Activated CD8-positive, alpha-beta memory T cell treated with anti-CD3 and anti-CD28 coated beads, Interleukin-2, amount 10 ng/mL, durations not matched to agents 7 days and 5 days (primary cell): ENCODE measurements at regions of chr11 and their contacts with region 1.

Region 1: DNA sequence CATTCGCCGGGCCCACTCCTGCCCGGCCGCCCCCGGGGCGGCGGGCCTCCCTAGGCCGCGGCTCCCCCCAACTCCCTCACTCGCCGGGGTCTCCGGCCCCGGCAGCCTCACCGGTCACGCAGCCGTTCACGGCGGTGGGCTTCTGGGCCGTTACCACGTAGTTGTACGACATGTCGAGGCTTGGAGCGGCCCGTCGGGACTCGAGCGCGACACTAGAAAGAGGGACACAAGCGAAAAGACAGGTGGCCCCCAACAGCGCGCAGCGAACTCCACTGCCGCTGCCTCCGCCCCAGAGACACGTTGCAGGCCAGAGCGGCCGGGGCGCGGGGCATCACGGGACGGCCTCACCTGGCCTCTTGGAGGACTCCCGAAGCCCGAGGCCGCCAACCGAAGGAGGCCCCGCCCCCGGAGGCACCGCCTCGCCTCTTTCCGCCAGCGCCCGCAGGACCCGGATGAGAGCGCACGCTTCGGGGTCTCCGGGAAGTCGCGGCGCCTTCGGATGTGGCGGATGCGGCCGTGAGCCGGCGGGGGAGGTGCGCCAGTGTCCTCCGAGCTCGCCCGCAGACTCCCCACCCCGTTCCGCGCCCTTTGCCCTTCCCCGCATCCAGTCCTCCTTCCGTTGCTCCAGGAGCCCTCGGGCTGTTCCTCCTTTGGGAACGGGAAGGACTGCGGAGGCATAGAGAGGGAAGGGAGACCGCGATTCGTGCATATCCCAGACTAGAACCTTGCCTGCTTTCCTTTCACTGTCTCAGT is at the starts of genes DDB1 and TKFC:
- DNase-seq: peak; percentile 99
- ATAC-seq: peak; percentile 95
- H3K4me3 Mint-ChIP-seq: peak within 1 kb of the TSS; percentile 86
- H3K27ac Mint-ChIP-seq: peak within 1 kb of the TSS; percentile 98
- H3K4me1 Mint-ChIP-seq: peaks cover 76% of the 10 kb centered on the region
- H3K27me3 Mint-ChIP-seq: no peaks in the 10 kb centered on the region
- total RNA-seq, gene DDB1: 189 to 258 TPM
- total RNA-seq, gene TKFC: 36.9 to 42.3 TPM

Region 2: DNA sequence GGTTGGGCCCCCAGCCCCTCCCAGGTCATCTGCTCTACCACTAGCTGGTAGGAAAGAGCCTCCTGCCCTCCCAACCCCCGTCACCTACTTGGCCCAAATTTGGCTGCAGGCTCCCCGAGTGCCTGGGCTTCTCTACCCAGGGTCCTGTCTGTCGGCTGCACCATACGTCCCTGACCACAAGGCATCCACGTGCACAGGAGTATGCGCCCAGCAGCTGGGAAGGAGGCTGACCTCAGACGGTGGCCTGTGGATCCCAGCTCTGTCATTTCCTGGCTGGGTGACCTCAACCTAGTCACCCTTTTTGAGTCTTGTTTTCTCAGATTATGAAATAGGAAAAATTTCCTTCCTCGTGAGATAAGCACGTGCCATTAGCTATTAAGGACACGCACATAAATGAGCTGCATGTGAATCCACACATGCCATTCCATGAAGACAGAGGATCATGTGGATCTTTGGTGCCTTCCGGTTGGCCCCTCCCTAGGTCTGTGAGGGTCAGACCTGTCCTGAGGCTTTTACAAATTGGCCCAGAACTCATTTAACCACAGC is 15.0 kb after region 1 on chr11:
- CTCF ChIA-PET with region 1: interaction called, 180 read pairs
- DNase-seq: no peak
- ATAC-seq: no peak
- H3K4me3 Mint-ChIP-seq: no peak overlapping the region
- H3K27ac Mint-ChIP-seq: no peak overlapping the region
- H3K4me1 Mint-ChIP-seq: no peaks in the 10 kb centered on the region
- H3K27me3 Mint-ChIP-seq: no peaks in the 10 kb centered on the region

Region 3: GRCh38 chr11:61369372-61370219 is 36.6 kb after region 1 on chr11:
- CTCF ChIA-PET with region 1: interaction called, 180 read pairs
- DNase-seq: no peak
- ATAC-seq: no peak
- H3K4me3 Mint-ChIP-seq: no peak overlapping the region
- H3K27ac Mint-ChIP-seq: peak overlapping the region; percentile 22
- H3K4me1 Mint-ChIP-seq: peaks cover 19% of the 10 kb centered on the region
- H3K27me3 Mint-ChIP-seq: no peaks in the 10 kb centered on the region

Region 4: DNA sequence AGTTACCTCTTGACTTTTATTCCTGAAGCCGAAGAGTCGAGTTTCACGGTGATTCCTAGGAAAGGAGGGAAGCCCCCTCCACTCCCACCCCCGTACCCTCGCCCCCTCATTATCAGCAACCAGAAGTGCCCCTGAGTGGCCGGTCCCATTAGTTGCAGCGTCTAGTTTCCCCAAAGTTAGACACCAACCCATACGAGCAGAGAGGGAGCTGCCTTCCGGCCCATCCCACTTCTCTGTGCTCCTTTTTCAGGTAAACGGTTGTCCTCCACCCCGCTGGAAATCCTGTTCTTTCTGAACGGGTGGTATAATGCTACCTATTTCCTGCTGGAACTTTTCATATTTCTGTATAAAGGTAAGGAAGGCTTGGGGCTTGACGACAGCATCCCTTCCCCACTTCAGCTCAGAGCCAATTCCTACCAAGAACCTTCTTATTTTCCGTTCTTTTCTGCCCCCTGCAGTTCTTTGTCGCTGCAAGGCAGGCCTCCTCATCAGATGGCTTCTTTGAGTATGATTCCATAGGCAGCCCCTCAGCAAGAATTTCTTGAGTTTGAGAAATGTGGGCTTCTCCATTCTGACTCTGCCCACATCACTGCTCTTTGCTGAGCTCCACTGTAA is 60.1 kb after region 1 on chr11:
- CTCF ChIA-PET with region 1: interaction called, 261 read pairs
- DNase-seq: no peak
- ATAC-seq: no peak
- H3K4me3 Mint-ChIP-seq: peak overlapping the region; percentile 90
- H3K27ac Mint-ChIP-seq: peak overlapping the region; percentile 96
- H3K4me1 Mint-ChIP-seq: peaks cover 22% of the 10 kb centered on the region
- H3K27me3 Mint-ChIP-seq: no peaks in the 10 kb centered on the region

Region 5: GRCh38 chr11:61429691-61430582 is 97.0 kb after region 1 on chr11 and contains the starts of genes CPSF7 and SDHAF2:
- CTCF ChIA-PET with region 1: interaction called, 48 read pairs
- DNase-seq: peak; percentile 98
- ATAC-seq: peak; percentile 88
- H3K4me3 Mint-ChIP-seq: peak within 1 kb of the TSS; percentile 98
- H3K27ac Mint-ChIP-seq: peak within 1 kb of the TSS; percentile 100
- H3K4me1 Mint-ChIP-seq: peaks cover 61% of the 10 kb centered on the region
- H3K27me3 Mint-ChIP-seq: no peaks in the 10 kb centered on the region
- total RNA-seq, gene CPSF7: 103 to 118 TPM
- total RNA-seq, gene SDHAF2: 37.6 to 57.6 TPM

Region 6: DNA sequence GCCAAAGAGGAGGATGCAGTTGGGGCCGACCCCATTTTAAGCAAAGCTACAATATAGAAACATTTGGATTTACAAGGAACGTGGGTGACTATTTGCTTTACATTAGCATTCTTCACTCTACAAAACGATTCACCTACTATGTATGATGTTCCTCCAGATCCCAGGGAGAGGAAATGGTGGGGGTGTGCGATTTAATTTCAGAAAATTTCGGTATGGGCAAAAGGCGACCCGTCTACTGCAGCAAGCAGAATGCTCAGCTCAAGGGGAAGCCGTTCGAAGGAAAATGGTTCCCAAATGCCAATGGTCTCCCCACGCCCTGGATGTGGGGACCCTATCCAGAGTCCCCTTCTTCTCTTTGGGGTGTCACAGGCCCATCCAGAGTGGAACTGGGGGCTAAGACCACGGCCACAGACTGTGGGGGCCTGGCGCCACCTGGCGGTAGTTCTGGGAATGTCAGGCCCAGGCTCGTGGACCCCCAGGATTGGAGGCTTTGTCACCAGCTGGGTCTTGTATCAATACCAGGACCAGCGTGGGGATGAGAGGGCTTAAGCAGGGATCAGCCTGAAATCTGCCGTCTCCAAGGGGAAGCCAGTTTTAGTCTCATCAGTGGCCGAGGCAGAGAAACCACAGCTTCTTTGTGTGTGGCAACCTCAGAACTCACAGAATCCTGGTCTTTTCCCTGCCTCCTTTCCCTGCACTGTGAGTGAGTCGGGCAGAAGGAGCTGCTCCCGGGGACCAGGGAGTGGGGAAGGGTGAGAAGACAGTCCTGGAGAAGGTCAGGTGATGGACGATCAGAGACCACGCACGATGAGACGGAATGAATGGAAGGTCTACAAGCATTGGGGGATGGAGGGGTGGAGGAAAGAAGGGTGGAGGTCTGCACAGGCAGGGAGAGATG is 184.0 kb after region 1 on chr11:
- CTCF ChIA-PET with region 1: interaction called, 21 read pairs
- DNase-seq: peak; percentile 66
- ATAC-seq: peak; percentile 72
- H3K4me3 Mint-ChIP-seq: no peak overlapping the region
- H3K27ac Mint-ChIP-seq: no peak overlapping the region
- H3K4me1 Mint-ChIP-seq: no peaks in the 10 kb centered on the region
- H3K27me3 Mint-ChIP-seq: peaks cover 2% of the 10 kb centered on the region